SK-N-SH (cell line): ENCODE measurements at regions of chr14 and their contacts with region 1.

Region 1: DNA sequence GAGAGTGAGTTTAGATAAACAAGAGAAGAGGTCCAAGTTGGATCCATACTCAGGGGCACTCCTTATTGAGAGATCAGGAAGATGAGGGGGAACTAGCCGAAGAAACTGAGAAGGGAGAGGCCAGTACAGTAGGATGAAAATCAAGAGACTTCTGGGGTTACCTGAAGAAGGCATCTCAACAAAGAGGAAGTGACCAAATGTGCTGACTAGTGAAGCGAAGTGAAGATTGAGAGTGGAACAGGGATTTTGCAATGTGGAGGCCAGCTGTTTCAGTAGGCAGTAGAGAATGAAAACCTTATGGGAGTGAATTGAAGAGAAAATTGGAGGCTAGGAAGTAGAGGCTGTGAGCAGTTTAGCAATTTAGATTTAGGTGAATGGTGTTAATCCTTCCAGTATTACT is 153.0 kb downstream of the SYNE2 start:
- DNase-seq: no peak
- H3K4me3 ChIP-seq: no peak overlapping the region
- H3K27ac ChIP-seq: no peak overlapping the region
- H3K4me1 ChIP-seq: no peaks in the 10 kb centered on the region
- H3K27me3 ChIP-seq: no peaks in the 10 kb centered on the region
- CTCF ChIP-seq: no peak
- EP300 ChIP-seq: no peak
- RAD21 ChIP-seq: no peak

Region 2: GRCh38 chr14:64026600-64026999 is 20.8 kb after region 1 on chr14:
- CTCF ChIA-PET with region 1: interaction called, 13 read pairs
- POLR2A ChIA-PET with region 1: no interaction called
- DNase-seq: no peak
- H3K4me3 ChIP-seq: no peak overlapping the region
- H3K27ac ChIP-seq: no peak overlapping the region
- H3K4me1 ChIP-seq: no peaks in the 10 kb centered on the region
- H3K27me3 ChIP-seq: no peaks in the 10 kb centered on the region
- CTCF ChIP-seq: no peak
- EP300 ChIP-seq: no peak
- RAD21 ChIP-seq: no peak